ENCODE measurements at regions of chr9 and their contacts with region 1.

Region 1: GRCh38 chr9:108105885-108106284 is 616.3 kb upstream of the KLF4 start:
- DNase-seq: no peak
- H3K4me3 ChIP-seq: no peak overlapping the region
- H3K27ac ChIP-seq: no peak overlapping the region
- H3K4me1 ChIP-seq: peaks cover 10% of the 10 kb centered on the region
- H3K27me3 ChIP-seq: no peaks in the 10 kb centered on the region
- CTCF ChIP-seq: no peak

Region 2: GRCh38 chr9:108033976-108034964 is 71.6 kb before region 1 on chr9:
- CTCF ChIA-PET with region 1: no interaction called
- dilution Hi-C with region 1: no loop called
- in situ Hi-C with region 1: no loop called
- intact Hi-C with region 1: loop called (anchors 10 kb)
- DNase-seq: peak; percentile 37
- H3K4me3 ChIP-seq: no peak overlapping the region
- H3K27ac ChIP-seq: no peak overlapping the region
- H3K4me1 ChIP-seq: peaks cover 12% of the 10 kb centered on the region
- H3K27me3 ChIP-seq: no peaks in the 10 kb centered on the region
- CTCF ChIP-seq: no peak

Region 3: DNA sequence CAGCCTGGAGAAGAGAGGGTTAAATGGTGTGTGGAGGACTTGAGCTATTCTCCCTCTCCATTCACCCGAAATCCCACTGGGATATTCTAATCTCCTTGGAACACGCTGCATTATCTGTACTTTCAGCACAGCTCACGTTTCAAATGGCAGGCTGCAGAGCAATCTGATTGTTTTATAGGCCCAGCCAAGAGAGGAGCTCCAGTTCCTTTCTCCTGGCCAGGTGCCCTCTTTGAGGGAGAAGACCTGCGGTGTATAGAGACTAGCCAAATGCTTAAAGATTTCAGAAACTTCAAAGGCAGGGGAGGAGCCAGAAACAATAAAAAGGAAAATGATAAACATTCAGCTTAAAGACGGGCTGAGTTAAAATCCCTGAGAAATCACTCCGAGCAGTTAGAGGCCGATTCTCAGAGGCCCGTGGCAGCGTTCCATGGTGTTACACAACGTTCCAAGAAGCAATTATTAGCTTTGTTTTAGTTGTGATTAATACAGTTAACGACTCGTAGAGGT is 52.3 kb before region 1 on chr9:
- CTCF ChIA-PET with region 1: no interaction called
- dilution Hi-C with region 1: no loop called
- in situ Hi-C with region 1: no loop called
- intact Hi-C with region 1: no loop called
- DNase-seq: peak; percentile 76
- H3K4me3 ChIP-seq: no peak overlapping the region
- H3K27ac ChIP-seq: peak overlapping the region; percentile 79
- H3K4me1 ChIP-seq: peaks cover 76% of the 10 kb centered on the region
- H3K27me3 ChIP-seq: no peaks in the 10 kb centered on the region
- CTCF ChIP-seq: no peak